ENCODE measurements at regions of chr2 and their contacts with region 1.

Region 1: GRCh38 chr2:240232961-240233893 is 92.8 kb upstream of the OTOS start:
- DNase-seq: peak; percentile 92
- ATAC-seq: peak; percentile 80

Region 2: GRCh38 chr2:240160291-240161086 is 72.7 kb before region 1 on chr2:
- intact Hi-C with region 1: no loop called
- DNase-seq: peak; percentile 20
- ATAC-seq: no peak

Region 3: GRCh38 chr2:240434728-240435456 is 201.7 kb after region 1 on chr2:
- intact Hi-C with region 1: loop called (anchors 5 kb)
- DNase-seq: peak; percentile 97
- ATAC-seq: peak; percentile 83

Measured in left ventricle myocardium superior (tissue), 1 donor.